SK-N-SH (cell line): ENCODE measurements at regions of chr16 and their contacts with region 1.

Region 1: GRCh38 chr16:25235991-25236390 is 19.2 kb downstream of the AQP8 start:
- DNase-seq: no peak
- H3K4me3 ChIP-seq: no peak overlapping the region
- H3K27ac ChIP-seq: no peak overlapping the region
- H3K4me1 ChIP-seq: no peaks in the 10 kb centered on the region
- H3K27me3 ChIP-seq: no peaks in the 10 kb centered on the region
- CTCF ChIP-seq: no peak
- EP300 ChIP-seq: no peak
- RAD21 ChIP-seq: no peak

Region 2: DNA sequence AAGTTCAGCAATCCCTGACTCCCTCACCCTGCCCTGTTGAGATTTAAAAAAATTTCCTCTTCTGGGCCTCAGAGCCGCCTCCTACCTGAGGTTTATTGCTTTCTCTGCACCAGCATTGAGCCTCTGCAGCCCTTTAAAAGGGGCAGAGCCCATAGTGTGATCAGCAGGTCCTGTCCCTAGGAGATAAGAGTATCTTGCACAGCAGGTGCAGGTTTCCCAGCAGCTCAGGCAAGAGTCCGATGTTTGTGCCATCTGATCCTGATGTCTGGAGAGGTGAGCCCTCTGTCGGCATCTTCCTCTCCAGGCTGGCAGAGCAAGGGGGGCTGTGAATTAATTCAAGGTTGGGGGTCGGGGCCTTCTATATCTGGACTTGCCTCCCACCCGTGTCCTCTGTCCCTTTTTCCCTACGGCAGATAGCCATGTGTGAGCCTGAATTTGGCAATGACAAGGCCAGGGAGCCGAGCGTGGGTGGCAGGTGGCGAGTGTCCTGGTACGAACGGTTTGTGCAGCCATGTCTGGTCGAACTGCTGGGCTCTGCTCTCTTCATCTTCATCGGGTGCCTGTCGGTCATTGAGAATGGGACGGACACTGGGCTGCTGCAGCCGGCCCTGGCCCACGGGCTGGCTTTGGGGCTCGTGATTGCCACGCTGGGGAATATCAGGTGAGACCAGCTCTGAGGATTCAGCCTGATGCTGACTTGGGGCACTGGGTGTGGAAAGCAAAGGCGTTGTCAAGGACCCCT is 19.0 kb before region 1 on chr16 and contains the start of gene AQP8:
- CTCF ChIA-PET with region 1: interaction called, 45 read pairs
- POLR2A ChIA-PET with region 1: no interaction called
- DNase-seq: no peak
- H3K4me3 ChIP-seq: no peak within 1 kb of the TSS
- H3K27ac ChIP-seq: no peak within 1 kb of the TSS
- H3K4me1 ChIP-seq: no peaks in the 10 kb centered on the region
- H3K27me3 ChIP-seq: peaks cover 5% of the 10 kb centered on the region
- CTCF ChIP-seq: no peak
- EP300 ChIP-seq: no peak
- RAD21 ChIP-seq: no peak
- polyA plus RNA-seq, gene AQP8: 0.03 TPM in 1 of 2 replicates, not detected in the other

Region 3: DNA sequence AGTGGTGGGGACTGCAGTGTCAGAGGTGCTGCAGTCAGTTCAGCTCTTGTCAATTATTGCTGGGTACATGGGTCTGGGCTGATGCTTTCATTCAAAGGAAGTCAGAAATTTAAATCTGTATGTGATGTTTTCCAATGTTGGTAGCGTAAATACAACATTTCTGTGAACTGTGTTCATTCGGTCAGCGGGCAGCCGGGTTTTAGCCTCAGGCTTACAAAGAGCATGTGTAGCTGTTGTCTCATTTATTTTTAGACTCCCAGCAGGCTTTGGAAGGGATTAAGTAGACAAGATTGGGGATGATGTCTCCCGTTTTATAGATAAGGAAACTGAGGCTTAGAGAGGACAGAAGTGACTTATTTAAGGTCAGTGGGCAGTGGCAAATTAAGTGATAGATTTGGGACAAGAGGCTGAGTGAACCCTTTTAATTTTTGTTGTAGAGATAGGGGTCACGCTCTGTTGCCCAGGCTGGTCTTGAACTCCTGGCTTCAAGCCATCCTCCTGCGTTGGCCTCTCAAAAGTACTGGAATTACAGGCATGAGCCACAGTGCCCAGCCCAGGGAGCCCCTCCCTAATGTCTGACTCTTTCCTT is 11.2 kb before region 1 on chr16:
- CTCF ChIA-PET with region 1: interaction called, 45 read pairs
- POLR2A ChIA-PET with region 1: no interaction called
- DNase-seq: no peak
- H3K4me3 ChIP-seq: no peak overlapping the region
- H3K27ac ChIP-seq: no peak overlapping the region
- H3K4me1 ChIP-seq: no peaks in the 10 kb centered on the region
- H3K27me3 ChIP-seq: no peaks in the 10 kb centered on the region
- CTCF ChIP-seq: no peak
- EP300 ChIP-seq: no peak
- RAD21 ChIP-seq: no peak

Region 4: DNA sequence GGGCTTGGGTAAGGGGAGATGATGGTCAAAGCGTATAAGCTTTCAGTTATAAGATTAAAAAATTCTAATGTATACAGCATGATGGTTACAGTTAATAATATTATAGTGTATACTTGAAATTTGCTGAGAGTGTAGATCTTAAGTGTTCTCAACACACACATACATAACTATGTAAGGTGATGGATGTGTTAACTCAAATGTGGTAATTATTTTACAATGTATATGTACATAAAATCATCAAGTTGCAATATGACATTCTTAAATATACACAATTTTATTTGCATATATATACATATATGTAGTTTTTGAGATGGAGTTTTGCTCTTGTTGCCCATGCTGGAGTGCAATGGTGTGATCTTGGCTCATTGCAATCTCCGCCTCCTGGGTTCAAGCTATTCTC is 14.5 kb after region 1 on chr16:
- CTCF ChIA-PET with region 1: interaction called, 11 read pairs
- POLR2A ChIA-PET with region 1: no interaction called
- DNase-seq: no peak
- H3K4me3 ChIP-seq: no peak overlapping the region
- H3K27ac ChIP-seq: no peak overlapping the region
- H3K4me1 ChIP-seq: peaks cover 0 to 3% of the 10 kb centered on the region in 2 experiments; a peak in 1 of 4 replicates
- H3K27me3 ChIP-seq: no peaks in the 10 kb centered on the region
- CTCF ChIP-seq: no peak
- EP300 ChIP-seq: no peak
- RAD21 ChIP-seq: no peak

Region 5: DNA sequence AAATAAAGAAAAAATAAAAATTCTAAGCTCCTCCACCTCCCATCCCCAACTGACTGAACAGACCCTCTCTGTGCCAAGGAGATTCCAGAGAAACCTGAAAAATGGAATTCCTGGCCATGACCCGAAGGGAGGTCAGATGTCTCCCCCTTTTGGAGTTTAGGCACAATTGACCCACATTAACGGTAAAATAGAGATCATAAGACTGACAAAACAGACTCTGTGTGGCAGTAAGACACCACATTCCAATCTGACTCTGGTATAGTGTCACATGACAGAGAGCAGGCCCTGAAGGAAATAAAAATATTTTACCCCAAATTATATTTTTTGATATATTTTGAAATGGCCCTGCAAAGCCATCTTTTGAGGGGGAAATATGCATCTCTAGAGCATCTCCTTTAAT is 136.7 kb after region 1 on chr16:
- CTCF ChIA-PET with region 1: no interaction called
- POLR2A ChIA-PET with region 1: no interaction called
- DNase-seq: no peak
- H3K4me3 ChIP-seq: no peak overlapping the region
- H3K27ac ChIP-seq: no peak overlapping the region
- H3K4me1 ChIP-seq: no peaks in the 10 kb centered on the region
- H3K27me3 ChIP-seq: no peaks in the 10 kb centered on the region
- CTCF ChIP-seq: 0 out of 2 replicates have a peak, but pooled peaks have one; percentile 15
- EP300 ChIP-seq: no peak
- RAD21 ChIP-seq: no peak

Region 6: GRCh38 chr16:25656639-25657038 is 420.6 kb after region 1 on chr16:
- CTCF ChIA-PET with region 1: no interaction called
- POLR2A ChIA-PET with region 1: no interaction called
- DNase-seq: no peak
- H3K4me3 ChIP-seq: no peak overlapping the region
- H3K27ac ChIP-seq: no peak overlapping the region
- H3K4me1 ChIP-seq: no peaks in the 10 kb centered on the region
- H3K27me3 ChIP-seq: no peaks in the 10 kb centered on the region
- CTCF ChIP-seq: no peak
- EP300 ChIP-seq: no peak
- RAD21 ChIP-seq: no peak